CD4-positive, alpha-beta T cell (primary cell): ENCODE measurements at regions of chr2 and their contacts with region 1.

Region 1: DNA sequence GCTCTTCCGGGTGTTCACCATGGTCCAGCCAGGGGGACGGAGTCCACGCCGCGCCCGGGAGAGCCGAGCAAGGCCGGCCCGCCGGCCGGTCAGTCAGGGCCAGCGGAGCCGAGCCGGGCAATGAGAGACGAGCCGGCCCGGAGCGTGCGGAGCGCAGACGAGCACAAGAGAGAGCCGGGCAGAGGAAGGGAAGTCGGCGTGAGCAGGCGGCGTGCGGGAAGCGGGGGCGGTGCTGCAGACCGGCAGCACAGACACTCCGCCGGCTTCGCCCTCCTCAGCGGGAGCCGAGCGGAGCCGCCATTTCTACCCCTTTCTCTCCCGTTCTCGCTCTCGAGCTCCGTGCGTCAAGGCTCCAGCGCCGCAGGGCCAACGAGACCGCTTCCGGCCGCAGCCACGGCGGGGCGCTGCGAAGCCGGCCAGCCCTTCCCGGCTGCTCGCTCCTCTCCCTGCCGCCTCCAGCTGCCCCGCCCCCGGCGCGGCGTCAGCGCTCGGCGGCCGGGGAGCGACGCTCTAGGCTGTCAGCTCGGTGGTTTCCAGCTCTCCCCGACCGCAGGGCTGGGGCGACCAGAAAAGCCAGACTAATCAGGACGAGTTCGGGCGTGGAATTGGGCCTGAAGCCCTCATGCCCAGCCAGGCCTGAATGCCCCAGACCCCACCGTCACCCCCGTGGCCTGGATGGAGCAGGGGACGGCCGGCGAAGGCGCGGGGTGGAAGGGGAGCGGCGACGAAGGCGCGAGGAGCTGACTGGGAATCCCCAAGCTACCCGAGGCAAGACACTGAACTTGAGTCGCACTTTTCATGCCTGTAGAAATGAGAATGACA is at the start of gene ATAD2B:
- DNase-seq: peak; percentile 87 to 99 (median 93)
- ATAC-seq: peak; percentile 80
- H3K4me3 ChIP-seq: peak within 1 kb of the TSS; percentile 91
- H3K4me3 Mint-ChIP-seq: peak within 1 kb of the TSS; percentile 98
- H3K27ac ChIP-seq: peak within 1 kb of the TSS; percentile 98 to 99
- H3K27ac Mint-ChIP-seq: peak within 1 kb of the TSS; percentile 98
- H3K4me1 ChIP-seq: peaks cover 28% of the 10 kb centered on the region
- H3K4me1 Mint-ChIP-seq: peaks cover 55% of the 10 kb centered on the region
- H3K27me3 ChIP-seq: no peaks in the 10 kb centered on the region
- H3K27me3 Mint-ChIP-seq: no peaks in the 10 kb centered on the region
- CTCF ChIP-seq: peak; percentile 74
- total RNA-seq, gene ATAD2B: 30.7 to 35.4 TPM

Region 2: DNA sequence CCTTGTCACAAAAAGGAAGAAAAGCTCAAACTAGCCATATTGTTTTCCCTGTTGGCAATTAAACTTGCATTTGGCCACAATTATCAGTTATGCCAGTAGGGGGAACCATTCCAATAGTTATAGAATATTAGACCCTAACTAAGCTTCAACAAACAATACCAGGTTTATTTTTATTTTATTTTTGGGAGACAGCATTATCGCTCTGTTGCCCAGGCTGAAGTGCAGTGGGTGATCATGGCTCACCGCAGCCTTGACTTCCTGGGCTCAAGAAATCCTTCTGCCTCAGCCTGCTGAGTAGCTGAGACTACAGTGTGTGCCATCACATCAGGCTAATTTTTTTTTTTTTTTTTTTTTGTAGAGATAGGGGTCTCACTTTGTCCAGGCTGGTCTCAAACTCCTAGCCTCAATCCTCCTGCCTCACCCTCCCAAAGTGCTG is 102.2 kb before region 1 on chr2:
- CTCF ChIA-PET with region 1: interaction called, 8 read pairs
- POLR2A ChIA-PET with region 1: interaction called, 16 read pairs
- intact Hi-C with region 1: no loop called
- DNase-seq: peak in 6 of 14 experiments; percentile 4 to 72 (median 51)
- ATAC-seq: peak; percentile 70
- H3K4me3 ChIP-seq: no peak overlapping the region
- H3K4me3 Mint-ChIP-seq: no peak overlapping the region
- H3K27ac ChIP-seq: no peak overlapping the region
- H3K27ac Mint-ChIP-seq: no peak overlapping the region
- H3K4me1 ChIP-seq: no peaks in the 10 kb centered on the region
- H3K4me1 Mint-ChIP-seq: no peaks in the 10 kb centered on the region
- H3K27me3 ChIP-seq: no peaks in the 10 kb centered on the region
- H3K27me3 Mint-ChIP-seq: no peaks in the 10 kb centered on the region
- CTCF ChIP-seq: peak; percentile 79

Region 3: GRCh38 chr2:23916727-23917405 is 10.1 kb before region 1 on chr2:
- CTCF ChIA-PET with region 1: interaction called, 3 read pairs
- POLR2A ChIA-PET with region 1: interaction called, 11 read pairs
- intact Hi-C with region 1: no loop called
- DNase-seq: peak in 4 of 14 experiments; percentile 18 to 34 (median 22)
- ATAC-seq: peak; percentile 44
- H3K4me3 ChIP-seq: no peak overlapping the region
- H3K4me3 Mint-ChIP-seq: peak overlapping the region; percentile 44
- H3K27ac ChIP-seq: no peak overlapping the region
- H3K27ac Mint-ChIP-seq: peak overlapping the region; percentile 50
- H3K4me1 ChIP-seq: peaks cover 18% of the 10 kb centered on the region
- H3K4me1 Mint-ChIP-seq: peaks cover 74% of the 10 kb centered on the region
- H3K27me3 ChIP-seq: no peaks in the 10 kb centered on the region
- H3K27me3 Mint-ChIP-seq: no peaks in the 10 kb centered on the region
- CTCF ChIP-seq: no peak

Region 4: GRCh38 chr2:23953625-23954024 is 26.7 kb after region 1 on chr2:
- CTCF ChIA-PET with region 1: interaction called, 11 read pairs
- POLR2A ChIA-PET with region 1: interaction called, 4 read pairs
- intact Hi-C with region 1: no loop called
- DNase-seq: no peak
- ATAC-seq: no peak
- H3K4me3 ChIP-seq: no peak overlapping the region
- H3K4me3 Mint-ChIP-seq: no peak overlapping the region
- H3K27ac ChIP-seq: no peak overlapping the region
- H3K27ac Mint-ChIP-seq: no peak overlapping the region
- H3K4me1 ChIP-seq: no peaks in the 10 kb centered on the region
- H3K4me1 Mint-ChIP-seq: peaks cover 5% of the 10 kb centered on the region
- H3K27me3 ChIP-seq: no peaks in the 10 kb centered on the region
- H3K27me3 Mint-ChIP-seq: no peaks in the 10 kb centered on the region
- CTCF ChIP-seq: no peak

Region 5: GRCh38 chr2:24046930-24047702 is 120.2 kb after region 1 on chr2 and contains the start of gene WDCP:
- CTCF ChIA-PET with region 1: interaction called, 13 read pairs
- POLR2A ChIA-PET with region 1: interaction called, 38 read pairs
- intact Hi-C with region 1: loop called (anchors 1 to 5 kb)
- DNase-seq: peak; percentile 82 to 98 (median 88)
- ATAC-seq: peak; percentile 99
- H3K4me3 ChIP-seq: peak within 1 kb of the TSS; percentile 83
- H3K4me3 Mint-ChIP-seq: peak within 1 kb of the TSS; percentile 94
- H3K27ac ChIP-seq: peak within 1 kb of the TSS in 1 of 2 donors; percentile 22
- H3K27ac Mint-ChIP-seq: peak within 1 kb of the TSS; percentile 79
- H3K4me1 ChIP-seq: peaks cover 30% of the 10 kb centered on the region
- H3K4me1 Mint-ChIP-seq: peaks cover 36% of the 10 kb centered on the region
- H3K27me3 ChIP-seq: peaks cover 10 to 21% of the 10 kb centered on the region in 2 experiments
- H3K27me3 Mint-ChIP-seq: peaks cover 10% of the 10 kb centered on the region
- CTCF ChIP-seq: no peak
- total RNA-seq, gene WDCP: 1.4 to 2.0 TPM

Region 6: DNA sequence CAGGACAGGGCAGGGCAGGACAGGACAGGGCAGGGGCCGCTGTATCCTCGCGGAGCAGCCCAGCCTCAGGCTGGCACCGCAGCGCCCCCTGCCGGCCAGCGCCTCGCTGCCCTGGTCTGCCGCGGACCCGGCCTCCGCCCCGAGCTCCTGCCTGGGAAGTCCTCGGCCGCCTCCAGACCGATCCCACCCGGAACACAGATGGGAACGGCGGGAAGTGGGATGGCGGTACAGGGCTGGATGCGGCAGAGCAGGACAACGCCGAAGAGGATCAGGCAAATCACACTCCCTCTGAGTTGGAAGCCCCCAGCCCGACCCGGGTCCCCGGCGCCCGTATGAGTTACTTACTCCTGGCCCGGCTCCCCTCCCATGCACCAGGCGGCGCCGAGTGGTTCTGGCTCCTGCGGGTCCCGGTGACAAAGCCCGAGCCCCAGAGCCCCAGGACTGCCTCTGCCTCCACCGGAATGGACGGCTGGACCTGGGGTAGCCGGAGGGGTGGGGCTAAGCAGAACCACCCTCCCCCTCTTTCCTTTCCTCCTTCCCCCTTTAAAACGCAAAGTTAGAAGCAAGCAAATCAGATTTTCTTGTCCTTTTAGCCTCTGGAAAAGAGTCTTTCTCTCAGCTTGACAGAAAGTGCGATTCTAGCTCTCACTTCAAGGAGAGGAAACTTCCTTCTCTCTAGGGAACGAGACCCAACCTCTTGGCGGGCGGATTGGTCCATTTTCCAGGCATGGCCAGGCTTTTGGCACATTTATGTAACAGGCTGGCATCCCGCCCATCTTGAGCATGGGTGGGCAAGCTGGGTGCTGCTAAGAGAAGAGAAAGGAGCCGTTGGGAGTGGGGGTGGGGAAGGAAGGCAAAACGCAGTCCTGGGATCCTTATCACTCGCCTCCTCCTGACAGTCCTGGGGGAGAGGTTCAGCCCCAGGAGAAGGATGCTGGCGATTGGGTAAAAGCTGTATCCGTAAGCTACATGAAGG is 157.7 kb after region 1 on chr2 and contains the start of gene TP53I3:
- CTCF ChIA-PET with region 1: interaction called, 51 read pairs
- POLR2A ChIA-PET with region 1: interaction called, 33 read pairs
- intact Hi-C with region 1: loop called (anchors 2 kb)
- DNase-seq: peak; percentile 57 to 91 (median 78)
- ATAC-seq: peak; percentile 88
- H3K4me3 ChIP-seq: peak within 1 kb of the TSS; percentile 61
- H3K4me3 Mint-ChIP-seq: peak within 1 kb of the TSS; percentile 91
- H3K27ac ChIP-seq: peak within 1 kb of the TSS in 1 of 2 donors; percentile 5
- H3K27ac Mint-ChIP-seq: peak within 1 kb of the TSS; percentile 82
- H3K4me1 ChIP-seq: peaks cover 19% of the 10 kb centered on the region
- H3K4me1 Mint-ChIP-seq: peaks cover 21% of the 10 kb centered on the region
- H3K27me3 ChIP-seq: no peaks in the 10 kb centered on the region
- H3K27me3 Mint-ChIP-seq: no peaks in the 10 kb centered on the region
- CTCF ChIP-seq: peak; percentile 94
- total RNA-seq, gene TP53I3: 0.20 to 0.30 TPM

Region 7: GRCh38 chr2:24792874-24793760 is 866.2 kb after region 1 on chr2 and contains the starts of genes CENPO and PTRHD1:
- CTCF ChIA-PET with region 1: interaction called, 3 read pairs
- POLR2A ChIA-PET with region 1: interaction called, 4 read pairs
- intact Hi-C with region 1: loop called in 1 of 2 experiments (anchors 5 kb)
- DNase-seq: peak; percentile 91 to 97 (median 93)
- ATAC-seq: peak; percentile 96
- H3K4me3 ChIP-seq: peak within 1 kb of the TSS; percentile 88
- H3K4me3 Mint-ChIP-seq: peak within 1 kb of the TSS; percentile 97
- H3K27ac ChIP-seq: peak within 1 kb of the TSS; percentile 95 to 97
- H3K27ac Mint-ChIP-seq: peak within 1 kb of the TSS; percentile 99
- H3K4me1 ChIP-seq: peaks cover 13% of the 10 kb centered on the region
- H3K4me1 Mint-ChIP-seq: peaks cover 21% of the 10 kb centered on the region
- H3K27me3 ChIP-seq: no peaks in the 10 kb centered on the region
- H3K27me3 Mint-ChIP-seq: no peaks in the 10 kb centered on the region
- CTCF ChIP-seq: peak; percentile 60
- total RNA-seq, gene CENPO: 3.4 to 3.5 TPM
- total RNA-seq, gene PTRHD1: 15.3 to 15.7 TPM